ENCODE measurements at regions of chr6 and their contacts with region 1.

Region 1: GRCh38 chr6:79466207-79466834 is 70.9 kb downstream of the LCA5 start:
- DNase-seq: peak; percentile 62
- ATAC-seq: no peak
- H3K4me3 ChIP-seq: no peak overlapping the region
- H3K27ac ChIP-seq: no peak overlapping the region
- H3K4me1 ChIP-seq: peaks cover 29% of the 10 kb centered on the region
- H3K27me3 ChIP-seq: no peaks in the 10 kb centered on the region
- CTCF ChIP-seq: peak; percentile 71

Region 2: GRCh38 chr6:79078075-79079025 is 388.0 kb before region 1 on chr6 and contains the start of gene PHIP:
- CTCF ChIA-PET with region 1: no interaction called
- POLR2A ChIA-PET with region 1: no interaction called
- intact Hi-C with region 1: loop called (anchors 1 kb)
- DNase-seq: peak; percentile 79
- ATAC-seq: peak; percentile 66
- H3K4me3 ChIP-seq: peak within 1 kb of the TSS; percentile 99
- H3K27ac ChIP-seq: peak within 1 kb of the TSS; percentile 75
- H3K4me1 ChIP-seq: peaks cover 11% of the 10 kb centered on the region; the same call in 1 of the 2 replicates
- H3K27me3 ChIP-seq: no peaks in the 10 kb centered on the region
- CTCF ChIP-seq: no peak
- total RNA-seq, gene PHIP: 20.8 and 21.2 TPM in 2 replicates

Region 3: GRCh38 chr6:79180060-79180459 is 286.3 kb before region 1 on chr6:
- CTCF ChIA-PET with region 1: no interaction called
- POLR2A ChIA-PET with region 1: no interaction called
- intact Hi-C with region 1: no loop called
- DNase-seq: peak; percentile 17
- ATAC-seq: no peak
- H3K4me3 ChIP-seq: no peak overlapping the region
- H3K27ac ChIP-seq: no peak overlapping the region
- H3K4me1 ChIP-seq: no peaks in the 10 kb centered on the region
- H3K27me3 ChIP-seq: no peaks in the 10 kb centered on the region
- CTCF ChIP-seq: no peak

Region 4: DNA sequence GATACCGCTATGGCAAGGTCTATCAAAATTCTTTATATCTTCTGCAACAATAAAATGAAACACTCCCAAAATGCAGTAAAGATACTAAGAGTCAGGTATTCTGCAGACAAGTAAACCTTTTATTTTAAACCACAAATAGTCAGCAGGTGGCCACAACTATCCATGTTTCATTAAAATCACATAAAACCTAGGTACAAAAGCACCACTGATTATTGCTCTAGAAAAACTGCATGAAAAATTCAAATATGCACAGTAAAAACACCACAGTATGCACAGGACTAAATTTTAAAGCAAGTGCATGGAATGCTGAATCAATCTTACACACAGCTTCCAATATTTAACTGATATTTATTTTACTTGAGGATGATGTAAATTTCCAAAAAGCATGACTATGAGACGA is 265.2 kb before region 1 on chr6:
- CTCF ChIA-PET with region 1: no interaction called
- POLR2A ChIA-PET with region 1: no interaction called
- intact Hi-C with region 1: loop called (anchors 5 kb)
- DNase-seq: peak; percentile 15
- ATAC-seq: no peak
- H3K4me3 ChIP-seq: no peak overlapping the region
- H3K27ac ChIP-seq: no peak overlapping the region
- H3K4me1 ChIP-seq: no peaks in the 10 kb centered on the region
- H3K27me3 ChIP-seq: no peaks in the 10 kb centered on the region
- CTCF ChIP-seq: no peak

Region 5: GRCh38 chr6:79494841-79495240 is 28.5 kb after region 1 on chr6:
- CTCF ChIA-PET with region 1: no interaction called
- POLR2A ChIA-PET with region 1: no interaction called
- intact Hi-C with region 1: no loop called
- DNase-seq: no peak
- ATAC-seq: no peak
- H3K4me3 ChIP-seq: no peak overlapping the region
- H3K27ac ChIP-seq: no peak overlapping the region
- H3K4me1 ChIP-seq: no peaks in the 10 kb centered on the region
- H3K27me3 ChIP-seq: no peaks in the 10 kb centered on the region
- CTCF ChIP-seq: no peak

Region 6: DNA sequence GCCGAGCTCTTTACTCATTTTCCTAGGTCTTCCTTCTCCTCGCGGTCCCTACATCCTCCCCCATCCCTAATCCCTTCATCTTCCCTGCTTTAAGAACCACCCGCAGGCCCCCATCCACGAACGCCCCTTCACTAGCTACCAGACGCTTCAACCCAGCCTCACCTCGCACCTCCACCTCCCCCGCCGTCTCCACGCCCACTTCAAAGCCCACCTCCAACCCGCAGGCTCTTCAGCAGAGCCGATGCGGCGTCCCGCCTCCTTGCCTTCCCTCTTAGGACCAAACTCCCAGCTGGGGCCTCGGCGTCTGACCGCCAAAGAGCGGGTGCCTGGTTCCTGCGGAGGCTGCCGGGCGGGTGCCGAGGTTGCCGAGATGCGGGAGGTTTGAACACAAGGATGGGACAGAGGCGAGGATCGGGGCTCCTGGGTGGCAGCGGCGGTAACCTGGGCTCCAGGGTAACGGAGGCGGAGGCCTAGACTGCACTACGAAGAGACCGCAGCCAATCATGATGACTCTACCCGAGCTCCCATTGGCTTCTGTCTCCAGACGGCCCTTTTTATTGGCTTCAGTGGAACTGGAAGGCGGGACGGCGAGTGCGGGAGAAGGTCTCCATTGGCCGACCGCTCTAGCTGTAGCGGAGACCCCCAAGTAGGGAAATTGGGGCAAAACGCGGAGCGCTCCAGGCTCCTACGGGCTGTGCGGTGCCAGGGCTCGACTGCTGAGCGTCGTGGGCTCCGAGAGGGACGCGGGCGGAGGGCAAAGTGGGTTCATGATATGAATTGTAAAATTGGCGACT is 70.8 kb after region 1 on chr6 and contains the start of gene LCA5:
- CTCF ChIA-PET with region 1: no interaction called
- POLR2A ChIA-PET with region 1: interaction called, 3 read pairs
- intact Hi-C with region 1: loop called (anchors 5 kb)
- DNase-seq: peak; percentile 92
- ATAC-seq: peak; percentile 95
- H3K4me3 ChIP-seq: peak within 1 kb of the TSS; percentile 93
- H3K27ac ChIP-seq: peak within 1 kb of the TSS; percentile 41
- H3K4me1 ChIP-seq: no peaks in the 10 kb centered on the region
- H3K27me3 ChIP-seq: no peaks in the 10 kb centered on the region
- CTCF ChIP-seq: no peak
- total RNA-seq, gene LCA5: 0.73 and 0.86 TPM in 2 replicates

Region 7: GRCh38 chr6:79672631-79673111 is 206.3 kb after region 1 on chr6:
- CTCF ChIA-PET with region 1: interaction called, 3 read pairs
- POLR2A ChIA-PET with region 1: no interaction called
- intact Hi-C with region 1: loop called (anchors 5 kb)
- DNase-seq: peak; percentile 65
- ATAC-seq: peak; percentile 41
- H3K4me3 ChIP-seq: no peak overlapping the region
- H3K27ac ChIP-seq: peak overlapping the region; percentile 70; the same call in 1 of the 2 replicates
- H3K4me1 ChIP-seq: peaks cover 23% of the 10 kb centered on the region
- H3K27me3 ChIP-seq: no peaks in the 10 kb centered on the region
- CTCF ChIP-seq: peak; percentile 81

Measured in PC-3 (cell line).